A549 (cell line): ENCODE measurements at regions of chr5 and their contacts with region 1.

Region 1: DNA sequence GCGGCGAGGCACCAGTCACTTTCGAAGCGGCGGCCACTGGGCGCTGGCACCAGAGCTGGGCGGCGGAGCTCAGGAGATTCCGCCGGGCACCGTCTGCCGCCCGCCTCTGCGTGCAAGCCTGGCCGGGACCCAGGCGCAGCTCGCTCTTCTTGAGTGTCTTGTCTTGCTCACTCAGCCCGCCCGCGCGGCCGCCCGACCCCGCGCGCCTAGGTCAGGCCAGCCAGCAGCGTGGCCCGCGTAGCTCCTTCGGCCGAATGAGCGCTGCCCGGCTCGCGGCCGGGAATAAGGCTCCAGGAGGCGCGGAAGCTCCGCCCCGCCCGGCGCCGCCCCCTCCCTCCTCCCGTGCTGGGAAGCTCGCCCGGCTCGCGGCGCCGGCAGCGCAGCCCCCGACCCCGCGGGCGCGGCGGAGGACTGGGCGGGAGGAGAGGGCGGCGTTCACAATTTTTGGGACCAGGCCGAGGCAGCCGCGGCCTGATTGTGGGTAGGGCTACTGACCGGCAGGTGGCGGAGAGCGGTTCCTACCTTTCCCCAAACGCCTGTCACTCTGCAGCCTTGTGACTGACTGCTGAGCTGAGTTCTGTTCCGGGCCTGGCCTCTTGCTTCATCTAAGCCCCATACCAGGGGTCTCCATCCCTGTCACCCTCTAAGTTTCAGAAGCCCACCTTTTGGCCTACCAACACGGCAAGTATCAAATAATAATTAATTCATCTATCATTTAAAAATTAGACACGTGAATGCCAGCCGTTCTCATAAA is at the start of gene HBEGF:
- DNase-seq: peak; percentile 69 to 85
- ATAC-seq: peak; percentile 78 to 91
- H3K4me3 ChIP-seq: peak within 1 kb of the TSS; percentile 75
- H3K27ac ChIP-seq: peak within 1 kb of the TSS; percentile 74 to 88
- H3K4me1 ChIP-seq: peaks cover 22% of the 10 kb centered on the region
- CTCF ChIP-seq: no peak; the same call in none of the 3 replicates
- EP300 ChIP-seq: no peak
- POLR2A ChIP-seq: peak; percentile 95
- RAD21 ChIP-seq: no peak; a peak in 2 of 5 replicates
- polyA plus RNA-seq, gene HBEGF: 4.2 and 5.0 TPM in 2 replicates

Region 2: DNA sequence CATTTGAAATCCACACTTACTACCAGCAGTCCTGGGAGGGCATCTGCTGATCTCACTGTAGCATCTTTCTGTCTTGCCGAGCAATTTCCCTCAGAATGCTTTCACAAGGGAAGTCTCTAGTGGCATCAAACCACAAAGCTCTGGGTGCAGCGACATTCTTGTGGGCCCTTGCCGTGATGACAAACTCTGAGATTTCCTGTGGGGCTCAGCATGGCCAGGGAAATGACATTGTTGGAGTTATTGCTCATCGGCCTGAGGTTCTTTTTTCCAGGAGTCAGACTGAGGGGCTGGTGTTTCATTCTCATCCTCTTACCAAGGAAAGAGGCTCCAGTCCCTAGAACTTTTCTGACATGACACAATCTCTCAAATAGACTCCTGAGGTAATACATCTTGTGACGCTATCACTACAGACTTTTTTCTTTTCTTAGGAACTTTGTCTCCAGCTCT is 95.0 kb before region 1 on chr5:
- CTCF ChIA-PET with region 1: interaction called, 1,613 read pairs
- POLR2A ChIA-PET with region 1: interaction called, 46 read pairs
- DNase-seq: peak; percentile 36 to 37
- ATAC-seq: peak; percentile 28 to 40; a peak in 3 of 6 replicates
- H3K4me3 ChIP-seq: no peak overlapping the region
- H3K27ac ChIP-seq: peak overlapping the region; percentile 18 to 51; a peak in 2 of 6 replicates
- H3K4me1 ChIP-seq: peaks cover 40% of the 10 kb centered on the region
- CTCF ChIP-seq: no peak
- EP300 ChIP-seq: no peak
- POLR2A ChIP-seq: no peak
- RAD21 ChIP-seq: no peak

Region 3: GRCh38 chr5:140273401-140273877 is 73.1 kb before region 1 on chr5:
- CTCF ChIA-PET with region 1: interaction called, 26 read pairs
- POLR2A ChIA-PET with region 1: no interaction called
- DNase-seq: no peak
- ATAC-seq: no peak
- H3K4me3 ChIP-seq: no peak overlapping the region
- H3K27ac ChIP-seq: no peak overlapping the region
- H3K4me1 ChIP-seq: no peaks in the 10 kb centered on the region
- CTCF ChIP-seq: no peak
- EP300 ChIP-seq: no peak
- POLR2A ChIP-seq: no peak
- RAD21 ChIP-seq: no peak

Region 4: DNA sequence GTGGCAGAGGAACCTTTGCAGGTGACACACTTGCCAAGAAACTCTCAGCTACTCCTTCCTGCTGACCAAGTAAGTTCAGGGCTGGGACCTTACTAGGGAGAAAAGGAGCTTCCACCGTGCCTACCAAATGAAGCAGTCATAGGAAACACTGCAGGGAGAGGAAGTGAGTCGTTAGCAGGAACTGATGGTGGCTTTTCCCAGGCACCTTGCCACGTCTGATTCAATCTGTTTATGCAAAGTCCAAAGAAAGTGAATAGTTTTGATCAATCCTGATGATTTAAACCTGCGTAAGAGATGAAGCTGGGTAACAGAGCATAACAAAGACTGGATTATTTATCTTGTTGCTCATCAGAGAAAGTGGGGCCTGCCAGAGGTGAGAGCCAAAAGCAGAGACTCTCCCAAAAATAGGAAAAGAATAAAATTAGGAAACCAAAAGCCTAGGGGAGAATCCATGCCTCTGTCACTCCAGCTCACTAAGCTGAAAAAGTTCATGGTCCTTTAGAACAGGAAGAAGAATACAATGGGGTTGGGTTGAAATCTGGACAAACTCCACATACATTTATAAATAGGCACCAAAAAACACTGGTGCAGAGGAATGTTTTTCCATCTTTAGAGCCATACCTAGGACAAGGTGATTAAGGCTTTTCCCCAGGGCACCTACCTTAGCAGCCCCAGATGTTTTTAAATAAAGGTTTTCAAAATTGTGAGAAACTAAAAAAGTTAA is 34.3 kb before region 1 on chr5:
- CTCF ChIA-PET with region 1: interaction called, 24 read pairs
- POLR2A ChIA-PET with region 1: interaction called, 11 read pairs
- DNase-seq: peak in 1 of 2 experiments; percentile 26
- ATAC-seq: peak in 1 of 2 experiments; percentile 62; a peak in 3 of 6 replicates
- H3K4me3 ChIP-seq: no peak overlapping the region
- H3K27ac ChIP-seq: peak overlapping the region; percentile 4 to 68; a peak in 3 of 6 replicates
- H3K4me1 ChIP-seq: peaks cover 25% of the 10 kb centered on the region
- CTCF ChIP-seq: no peak
- EP300 ChIP-seq: no peak
- POLR2A ChIP-seq: no peak
- RAD21 ChIP-seq: no peak

Region 5: DNA sequence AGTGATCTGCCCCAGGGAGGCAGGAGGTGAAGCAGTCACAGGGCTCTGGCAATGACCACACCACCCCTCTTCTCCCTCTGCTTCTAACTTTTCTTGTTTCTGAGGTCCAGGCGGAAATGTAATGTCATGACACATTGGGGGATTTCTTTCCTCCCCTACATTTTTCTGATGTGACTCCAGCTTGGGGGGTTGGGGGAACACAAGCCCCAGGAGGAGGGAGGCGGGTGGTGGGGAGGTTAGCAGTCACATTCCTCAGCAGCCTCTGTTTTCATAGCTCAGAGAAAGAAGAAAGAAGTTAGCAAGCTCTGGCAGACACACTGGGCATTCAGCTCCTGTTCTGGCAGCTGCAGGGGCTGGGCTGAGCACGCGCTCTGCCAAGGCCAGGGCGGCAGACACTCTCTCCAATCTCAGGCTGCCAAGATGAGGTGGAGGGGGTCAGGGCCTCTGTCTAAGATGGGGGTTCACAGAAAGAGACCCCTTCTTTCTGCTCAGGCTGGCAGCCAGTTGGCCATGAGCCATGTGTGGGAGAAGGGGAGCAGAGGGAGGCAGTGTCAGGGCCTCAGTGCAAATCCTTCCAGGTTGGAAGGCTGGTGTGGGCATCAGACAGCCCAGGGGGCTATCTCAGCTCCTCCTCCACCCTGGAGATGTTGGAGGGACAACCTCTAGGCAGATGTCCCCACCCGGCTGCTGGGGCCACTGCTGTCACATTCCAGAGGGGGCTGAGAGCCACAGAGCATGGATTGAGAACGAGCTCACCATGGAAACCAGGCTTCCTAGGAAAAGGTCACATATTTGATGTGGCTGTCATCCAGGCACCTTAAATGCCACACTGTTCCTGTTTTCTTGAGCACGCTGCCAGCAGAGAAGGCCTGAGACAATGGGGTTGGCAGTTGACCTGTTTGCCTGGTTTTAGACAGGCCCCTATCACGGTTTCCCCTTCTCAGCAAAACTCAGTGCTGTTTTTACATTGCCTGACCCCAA is 23.5 kb before region 1 on chr5:
- CTCF ChIA-PET with region 1: interaction called, 38 read pairs
- POLR2A ChIA-PET with region 1: interaction called, 13 read pairs
- DNase-seq: peak in 1 of 2 experiments; percentile 47
- ATAC-seq: peak; percentile 67 to 76
- H3K4me3 ChIP-seq: no peak overlapping the region
- H3K27ac ChIP-seq: peak overlapping the region; percentile 66 to 89
- H3K4me1 ChIP-seq: peaks cover 51% of the 10 kb centered on the region
- CTCF ChIP-seq: no peak
- EP300 ChIP-seq: 0 out of 5 replicates have a peak, but pooled peaks of 1 of the 2 experiments have one; percentile 10
- POLR2A ChIP-seq: no peak
- RAD21 ChIP-seq: no peak

Region 6: DNA sequence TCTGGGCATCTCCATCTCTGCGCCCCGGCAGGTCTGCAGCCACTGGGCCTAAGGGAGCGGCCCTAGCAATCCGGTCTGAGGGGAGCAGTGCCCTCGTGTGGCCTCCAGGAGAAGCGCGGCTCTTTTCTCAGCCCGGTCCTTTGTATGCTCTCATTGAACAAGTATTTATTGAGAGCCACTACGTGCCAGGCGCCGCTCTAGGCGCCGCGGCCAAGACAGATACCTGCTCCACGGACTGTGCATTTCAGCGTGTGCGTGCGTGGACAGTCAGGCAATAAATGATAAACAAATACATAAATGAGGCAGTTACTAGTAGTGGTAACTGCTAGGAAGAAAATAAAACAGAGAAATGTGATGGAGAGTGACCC is 11.2 kb after region 1 on chr5:
- CTCF ChIA-PET with region 1: interaction called, 155 read pairs
- POLR2A ChIA-PET with region 1: interaction called, 4 read pairs
- DNase-seq: peak; percentile 89 to 93
- ATAC-seq: peak; percentile 83 to 96
- H3K4me3 ChIP-seq: no peak overlapping the region
- H3K27ac ChIP-seq: peak overlapping the region; percentile 47 to 66; a peak in 5 of 6 replicates
- H3K4me1 ChIP-seq: peaks cover 5% of the 10 kb centered on the region; the same call in 1 of the 3 replicates
- CTCF ChIP-seq: peak; percentile 89
- EP300 ChIP-seq: no peak
- POLR2A ChIP-seq: no peak
- RAD21 ChIP-seq: peak; percentile 81 to 82

Region 7: GRCh38 chr5:140408750-140409256 is 62.3 kb after region 1 on chr5:
- CTCF ChIA-PET with region 1: no interaction called
- POLR2A ChIA-PET with region 1: no interaction called
- DNase-seq: peak in 1 of 2 experiments; percentile 19
- ATAC-seq: peak; percentile 75 to 77
- H3K4me3 ChIP-seq: no peak overlapping the region
- H3K27ac ChIP-seq: no peak overlapping the region
- H3K4me1 ChIP-seq: peaks cover 20% of the 10 kb centered on the region
- CTCF ChIP-seq: no peak
- EP300 ChIP-seq: no peak
- POLR2A ChIP-seq: no peak
- RAD21 ChIP-seq: peak in 1 of 2 experiments; percentile 11; a peak in 1 of 5 replicates